GM18951 (cell line): ENCODE measurements at regions of chr4 and their contacts with region 1.

Region 1: GRCh38 chr4:103204111-103204510 is 6.0 kb upstream of the CENPE start:
- POLR2A ChIP-seq: no peak

Region 2: GRCh38 chr4:103786014-103786413 is 581.9 kb after region 1 on chr4:
- in situ Hi-C with region 1: loop called (anchors 25 kb)
- POLR2A ChIP-seq: no peak